Posterior cingulate gyrus (tissue), 11 donors: ENCODE measurements at regions of chr16 and their contacts with region 1.

Region 1: GRCh38 chr16:22898874-22899348 is 84.9 kb downstream of the HS3ST2 start:
- DNase-seq: peak; percentile 40 to 97 (median 86)

Region 2: DNA sequence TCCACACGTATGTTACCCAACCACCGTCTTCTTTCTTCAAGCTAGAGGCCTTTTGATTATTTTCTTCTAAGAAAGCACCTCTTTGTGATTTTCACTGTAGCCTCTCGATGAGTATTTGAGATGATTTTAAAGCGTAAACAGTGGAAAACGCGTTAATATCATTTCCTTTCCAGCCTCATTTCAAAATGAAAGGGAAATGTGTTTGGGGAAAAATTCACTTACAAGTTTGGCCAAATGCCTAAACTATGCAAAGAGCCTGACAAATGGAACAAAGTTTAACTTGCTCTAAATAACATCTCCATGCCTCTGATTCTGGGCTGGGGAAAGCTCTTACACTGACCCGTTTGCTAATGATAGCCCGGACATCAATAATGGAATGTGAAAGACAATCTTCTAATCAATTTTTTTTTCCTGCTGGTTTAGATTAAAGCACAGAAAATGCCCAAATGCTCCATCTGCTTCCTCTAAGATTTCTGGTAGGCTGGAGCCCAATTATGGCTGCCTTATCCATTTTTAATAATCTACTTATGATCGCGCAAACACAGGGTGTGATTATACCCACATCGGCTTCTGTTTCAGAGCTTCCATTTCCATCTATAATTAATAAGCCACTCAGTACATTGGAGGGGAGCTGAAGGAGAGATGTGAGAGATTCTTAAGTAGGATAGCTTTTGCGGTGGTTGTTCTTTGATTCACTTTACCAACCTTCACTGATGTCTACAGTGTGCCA is 41.5 kb before region 1 on chr16:
- intact Hi-C with region 1: no loop called
- DNase-seq: no peak

Region 3: GRCh38 chr16:22948603-22949368 is 49.9 kb after region 1 on chr16:
- intact Hi-C with region 1: loop called (anchors 2 kb)
- DNase-seq: peak in 9 of 10 donors; percentile 26 to 88 (median 60)

Region 4: GRCh38 chr16:22977294-22977697 is 78.4 kb after region 1 on chr16:
- intact Hi-C with region 1: no loop called
- DNase-seq: no peak

Region 5: DNA sequence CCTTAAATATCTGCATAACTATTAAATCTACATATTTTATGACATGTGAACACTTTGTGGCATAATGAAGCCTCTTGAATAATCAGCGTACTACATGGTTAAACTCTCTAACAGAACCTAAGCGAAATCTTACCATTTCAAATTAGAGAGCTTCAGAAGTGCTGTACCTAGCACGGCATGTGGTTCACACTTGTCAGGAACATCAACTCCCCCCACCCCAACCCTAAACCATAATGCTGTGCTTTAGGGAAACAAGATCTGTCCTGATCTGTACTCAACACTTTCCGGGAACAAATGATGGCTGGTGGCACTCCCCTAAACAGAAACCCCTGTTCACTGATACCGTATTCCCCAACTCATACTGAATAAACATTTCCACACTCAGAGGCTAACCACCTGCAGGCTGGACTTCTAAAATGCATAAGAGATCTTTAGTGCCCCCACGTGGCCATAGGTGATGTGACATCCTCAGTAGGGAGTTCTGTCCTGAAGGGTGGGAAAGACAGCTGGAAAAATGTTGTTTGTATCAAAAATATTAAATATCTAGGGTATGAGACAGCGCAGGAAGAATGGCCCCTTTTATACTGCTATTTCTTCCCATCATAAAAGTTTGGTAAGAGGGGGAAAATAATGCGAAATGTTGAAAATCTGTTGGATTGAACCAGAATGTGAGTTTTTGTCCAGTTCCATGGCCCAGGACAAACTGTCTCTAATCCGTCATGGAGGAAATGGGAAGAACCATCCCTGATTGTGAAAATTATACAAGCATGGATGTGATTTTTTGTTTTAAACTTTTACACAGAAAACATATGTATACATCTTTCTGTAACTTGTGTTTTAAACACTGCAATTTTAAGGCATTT is 161.8 kb after region 1 on chr16:
- intact Hi-C with region 1: loop called (anchors 2 kb)
- DNase-seq: peak in 9 of 10 donors; percentile 39 to 95 (median 83)

Region 6: DNA sequence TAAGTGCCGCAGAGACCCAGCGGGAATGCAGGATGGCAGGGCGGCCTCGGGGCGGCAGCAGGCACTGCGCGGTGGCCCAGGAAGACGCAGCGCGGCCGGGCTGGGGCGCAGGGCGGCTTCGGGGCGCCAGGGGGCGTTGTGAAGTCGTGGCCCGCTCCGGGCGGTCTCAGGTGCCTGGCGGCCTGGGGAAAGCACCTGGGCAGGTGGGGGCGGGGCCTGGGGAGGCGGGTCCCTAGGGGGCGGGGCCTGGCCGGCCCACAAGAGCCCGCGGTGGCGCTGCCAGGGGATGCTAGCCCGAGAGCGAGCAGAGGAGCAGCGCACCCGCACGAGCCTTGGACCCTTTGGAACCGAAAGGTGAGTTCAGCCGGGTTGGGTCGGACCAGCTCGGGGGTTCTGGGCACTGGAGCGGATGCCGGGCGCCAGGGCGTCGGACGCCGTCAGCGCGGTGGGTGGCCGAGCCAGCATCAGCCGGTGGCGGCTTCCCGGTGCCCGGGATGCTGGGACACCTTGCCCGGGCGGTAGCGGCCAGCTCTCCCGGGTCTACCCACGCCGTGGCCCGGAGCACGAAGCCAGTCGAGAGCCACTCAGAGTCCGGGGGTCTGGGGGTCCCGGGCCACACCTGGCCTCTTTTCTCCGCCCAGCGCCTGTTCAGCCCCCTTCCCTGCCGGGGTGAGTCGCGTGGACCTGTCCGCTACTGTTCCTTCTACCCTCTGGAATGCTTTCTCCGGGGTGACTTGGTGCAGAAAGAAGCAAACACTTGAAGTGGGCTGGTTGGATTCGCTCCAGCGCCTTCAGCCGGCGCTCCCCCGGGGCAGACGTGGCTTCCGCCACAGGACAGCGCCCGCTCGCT is 283.8 kb after region 1 on chr16 and contains the start of gene SCNN1G:
- intact Hi-C with region 1: loop called (anchors 10 kb)
- DNase-seq: peak; percentile 32 to 95 (median 68)